Naive thymus-derived CD4-positive, alpha-beta T cell (primary cell): ENCODE measurements at regions of chr5 and their contacts with region 1.

Region 1: DNA sequence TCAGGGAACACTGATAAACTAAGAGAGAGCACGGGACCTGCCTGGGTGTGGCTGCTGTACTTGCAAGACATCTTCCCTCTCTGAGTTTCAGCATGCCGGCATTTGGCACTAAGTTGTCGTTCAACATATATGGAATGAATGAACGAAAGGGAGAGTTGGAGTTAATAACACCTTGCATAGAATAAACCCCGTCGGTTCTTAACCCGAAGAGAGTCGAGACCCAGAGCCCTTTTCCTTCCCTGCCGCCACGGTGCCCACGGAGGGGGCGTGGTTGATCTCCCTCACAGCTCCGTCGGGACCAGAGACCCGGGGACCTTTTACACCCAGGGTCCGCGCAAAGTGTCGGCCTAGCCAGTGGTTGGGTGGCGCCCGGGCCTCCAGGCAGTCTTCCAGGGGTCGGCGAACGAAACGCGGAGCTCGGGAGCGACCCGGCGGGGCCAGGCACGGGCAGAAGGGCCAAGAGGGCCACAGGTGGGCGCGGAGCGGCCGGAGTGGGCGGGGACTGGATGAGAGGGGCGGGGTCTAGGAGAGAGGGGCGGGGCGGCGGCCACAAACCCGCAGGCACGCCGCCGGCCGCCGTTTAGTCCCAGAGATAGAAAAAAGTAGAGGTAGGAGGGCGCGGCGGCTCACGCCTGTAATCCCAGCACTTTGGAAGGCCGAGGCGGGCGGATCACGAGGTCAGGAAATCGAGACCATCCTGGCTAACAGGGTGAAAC is 735 bp upstream of the RPL26L1 start:
- DNase-seq: peak in 7 of 9 donors; percentile 13 to 76 (median 57)
- ATAC-seq: peak; percentile 84
- H3K4me3 ChIP-seq: peak overlapping the region; percentile 90
- H3K4me3 Mint-ChIP-seq: peak overlapping the region; percentile 88 to 98 (median 97)
- H3K27ac ChIP-seq: peak overlapping the region; percentile 95
- H3K27ac Mint-ChIP-seq: peak overlapping the region; percentile 94 to 99 (median 98)
- H3K4me1 ChIP-seq: peaks cover 9 to 10% of the 10 kb centered on the region in 2 donors
- H3K4me1 Mint-ChIP-seq: peaks cover 18 to 45% (median 37%) of the 10 kb centered on the region in 7 donors
- H3K27me3 ChIP-seq: no peaks in the 10 kb centered on the region
- H3K27me3 Mint-ChIP-seq: peaks cover 0 to 4% (median 0%) of the 10 kb centered on the region in 5 donors

Region 2: DNA sequence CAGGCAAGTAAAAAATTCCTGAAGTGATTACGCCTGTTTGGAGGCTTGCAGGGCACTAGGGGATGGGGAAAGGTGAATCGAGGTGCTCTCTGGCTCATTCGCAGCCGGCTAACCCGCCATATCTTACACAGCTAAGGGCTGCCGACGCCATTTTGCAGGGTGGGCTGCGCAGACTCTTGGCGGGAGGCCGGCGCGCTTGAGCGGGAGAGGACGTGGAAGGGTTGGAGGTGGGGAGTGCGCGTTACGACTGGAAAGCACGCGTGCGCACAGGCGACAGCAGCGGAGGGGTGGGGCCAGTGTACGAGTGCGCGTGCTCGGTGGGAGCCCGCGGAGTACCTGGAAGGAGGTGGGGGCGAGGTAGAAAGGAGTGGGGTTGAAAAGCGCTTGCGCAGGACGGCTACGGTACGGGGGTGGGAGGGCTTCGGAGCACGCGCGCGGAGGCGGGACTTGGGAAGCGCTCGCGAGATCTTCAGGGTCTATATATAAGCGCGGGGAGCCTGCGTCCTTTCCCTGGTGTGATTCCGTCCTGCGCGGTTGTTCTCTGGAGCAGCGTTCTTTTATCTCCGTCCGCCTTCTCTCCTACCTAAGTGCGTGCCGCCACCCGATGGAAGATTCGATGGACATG is 1571.0 kb before region 1 on chr5 and contains the start of gene NPM1:
- CTCF ChIA-PET with region 1: no interaction called
- POLR2A ChIA-PET with region 1: no interaction called
- intact Hi-C with region 1: loop called (anchors 1 to 2 kb)
- DNase-seq: peak; percentile 90 to 99 (median 98)
- ATAC-seq: peak; percentile 93
- H3K4me3 ChIP-seq: peak within 1 kb of the TSS; percentile 91
- H3K4me3 Mint-ChIP-seq: peak within 1 kb of the TSS; percentile 92 to 99 (median 98)
- H3K27ac ChIP-seq: peak within 1 kb of the TSS; percentile 88
- H3K27ac Mint-ChIP-seq: peak within 1 kb of the TSS; percentile 96 to 100 (median 98)
- H3K4me1 ChIP-seq: peaks cover 31 to 40% of the 10 kb centered on the region in 2 donors
- H3K4me1 Mint-ChIP-seq: peaks cover 25 to 52% (median 49%) of the 10 kb centered on the region in 7 donors
- H3K27me3 ChIP-seq: no peaks in the 10 kb centered on the region
- H3K27me3 Mint-ChIP-seq: peaks cover 0 to 6% (median 0%) of the 10 kb centered on the region in 5 donors
- total RNA-seq, gene NPM1: 807 to 1,238 (median 1,192) TPM

Region 3: GRCh38 chr5:172454358-172455086 is 504.0 kb before region 1 on chr5 and contains the start of gene SH3PXD2B:
- CTCF ChIA-PET with region 1: no interaction called
- POLR2A ChIA-PET with region 1: no interaction called
- intact Hi-C with region 1: loop called (anchors 10 kb)
- DNase-seq: peak in 7 of 9 donors; percentile 11 to 52 (median 47)
- ATAC-seq: peak; percentile 73
- H3K4me3 ChIP-seq: peak within 1 kb of the TSS; percentile 36
- H3K4me3 Mint-ChIP-seq: peak within 1 kb of the TSS; percentile 82 to 93 (median 86)
- H3K27ac ChIP-seq: no peak within 1 kb of the TSS
- H3K27ac Mint-ChIP-seq: peak within 1 kb of the TSS in 7 of 9 donors; percentile 39 to 66 (median 52)
- H3K4me1 ChIP-seq: no peaks in the 10 kb centered on the region
- H3K4me1 Mint-ChIP-seq: peaks cover 8 to 17% (median 13%) of the 10 kb centered on the region in 7 donors
- H3K27me3 ChIP-seq: peaks cover 0 to 4% of the 10 kb centered on the region in 2 donors
- H3K27me3 Mint-ChIP-seq: peaks cover 12 to 59% (median 39%) of the 10 kb centered on the region in 5 donors
- total RNA-seq, gene SH3PXD2B: 0.15 to 1.1 (median 0.34) TPM

Region 4: DNA sequence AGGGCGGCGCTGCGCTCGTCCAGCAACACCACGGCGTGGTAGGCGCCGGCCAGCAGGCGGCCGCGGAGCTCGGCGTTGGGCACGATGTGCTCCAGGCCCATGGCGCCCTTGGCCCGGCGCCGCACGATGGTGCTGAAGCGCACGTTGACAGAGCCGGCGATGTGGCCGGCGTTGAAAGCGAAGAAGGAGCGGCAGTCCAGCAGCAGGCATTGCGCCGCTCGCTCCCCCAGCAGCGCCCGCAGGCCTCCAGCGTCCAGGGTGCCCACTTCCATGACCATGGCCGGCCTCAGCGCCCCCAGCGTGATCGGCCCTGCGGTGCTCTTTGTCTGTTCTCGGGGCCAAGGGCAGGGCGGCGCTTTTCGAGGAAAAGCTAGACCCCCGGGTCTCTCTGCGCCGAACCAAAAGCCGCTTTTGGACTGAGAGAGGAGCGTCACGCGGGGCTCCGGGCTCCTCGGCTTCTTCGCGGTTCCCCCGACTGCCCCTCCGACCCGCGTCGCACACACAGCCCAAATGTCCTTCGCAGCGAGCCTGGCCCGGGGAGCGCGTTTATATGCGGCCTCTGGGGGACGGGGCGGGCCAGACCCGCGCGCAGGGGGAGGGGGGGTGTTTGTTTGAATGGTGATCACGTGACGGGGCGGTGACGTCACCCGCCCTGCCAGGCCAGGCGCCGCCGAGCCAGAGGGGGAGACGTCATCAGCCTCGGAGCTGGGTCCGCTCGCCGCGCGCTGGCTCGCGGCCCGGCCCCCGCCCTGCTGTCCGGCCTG is 187.6 kb before region 1 on chr5 and contains the start of gene DUSP1:
- CTCF ChIA-PET with region 1: interaction called, 3 read pairs
- POLR2A ChIA-PET with region 1: interaction called, 4 read pairs
- intact Hi-C with region 1: loop called in 1 of 2 experiments (anchors 1 kb)
- DNase-seq: peak; percentile 94 to 99 (median 96)
- ATAC-seq: peak; percentile 64
- H3K4me3 ChIP-seq: peak within 1 kb of the TSS; percentile 81
- H3K4me3 Mint-ChIP-seq: peak within 1 kb of the TSS; percentile 89 to 97 (median 94)
- H3K27ac ChIP-seq: peak within 1 kb of the TSS; percentile 97
- H3K27ac Mint-ChIP-seq: peak within 1 kb of the TSS; percentile 97 to 100 (median 100)
- H3K4me1 ChIP-seq: peaks cover 26 to 39% of the 10 kb centered on the region in 2 donors
- H3K4me1 Mint-ChIP-seq: peaks cover 21 to 73% (median 63%) of the 10 kb centered on the region in 7 donors
- H3K27me3 ChIP-seq: no peaks in the 10 kb centered on the region
- H3K27me3 Mint-ChIP-seq: no peaks in the 10 kb centered on the region
- total RNA-seq, gene DUSP1: 5.4 to 2,522 (median 40.7) TPM

Region 5: GRCh38 chr5:172932313-172933017 is 26.0 kb before region 1 on chr5:
- CTCF ChIA-PET with region 1: interaction called, 10 read pairs
- POLR2A ChIA-PET with region 1: interaction called, 3 read pairs
- intact Hi-C with region 1: no loop called
- DNase-seq: peak; percentile 53 to 79 (median 68)
- ATAC-seq: peak; percentile 98
- H3K4me3 ChIP-seq: no peak overlapping the region
- H3K4me3 Mint-ChIP-seq: no peak overlapping the region
- H3K27ac ChIP-seq: no peak overlapping the region
- H3K27ac Mint-ChIP-seq: peak overlapping the region in 8 of 9 donors; percentile 25 to 82 (median 52)
- H3K4me1 ChIP-seq: no peaks in the 10 kb centered on the region
- H3K4me1 Mint-ChIP-seq: peaks cover 0 to 13% (median 6%) of the 10 kb centered on the region in 7 donors
- H3K27me3 ChIP-seq: no peaks in the 10 kb centered on the region
- H3K27me3 Mint-ChIP-seq: no peaks in the 10 kb centered on the region

Region 6: DNA sequence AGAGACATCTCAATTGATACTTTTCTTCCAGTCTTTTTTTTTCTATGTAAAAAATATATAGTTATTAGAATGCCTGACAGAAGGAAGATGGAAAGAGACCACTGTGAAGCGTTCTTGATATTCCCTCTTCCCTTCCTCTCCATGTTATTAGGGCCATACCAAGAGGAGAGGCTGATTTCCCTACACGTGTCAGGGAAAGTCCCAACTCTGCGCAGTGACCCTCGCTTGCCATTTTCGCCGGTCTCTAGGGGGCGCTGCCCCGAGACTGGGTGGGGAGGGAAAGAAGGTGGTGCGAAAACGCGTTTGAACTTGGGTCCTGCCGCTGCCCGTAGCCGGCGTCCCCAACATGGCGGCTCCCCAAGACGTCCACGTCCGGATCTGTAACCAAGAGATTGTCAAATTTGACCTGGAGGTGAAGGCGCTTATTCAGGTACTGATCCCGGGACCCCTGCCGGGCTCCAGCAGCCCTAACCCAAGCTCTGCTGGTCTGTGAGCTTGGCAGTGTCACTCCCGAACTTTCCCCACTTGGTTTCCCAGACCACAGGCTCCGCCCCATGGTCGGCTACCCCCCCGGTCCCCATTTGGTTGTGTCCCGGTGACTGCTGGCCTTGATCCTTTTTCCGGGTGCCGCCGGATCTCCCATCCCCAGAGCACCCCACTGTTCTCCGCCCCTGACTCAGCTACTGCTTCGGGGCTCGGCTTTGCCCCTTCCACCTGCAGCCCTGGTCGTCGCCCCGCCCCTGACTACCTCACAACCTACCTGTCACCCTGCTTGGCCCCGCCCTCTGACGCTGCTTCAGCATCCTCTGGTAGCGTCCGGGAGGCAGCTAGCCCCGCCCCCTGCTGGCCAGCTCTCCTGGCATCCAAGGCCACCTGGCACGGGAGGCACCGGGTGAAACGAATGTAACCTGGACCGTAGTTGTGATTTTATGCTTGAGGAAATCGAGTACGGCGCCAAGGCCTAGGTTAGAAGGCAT is 186.0 kb after region 1 on chr5 and contains the start of gene BNIP1:
- CTCF ChIA-PET with region 1: no interaction called
- POLR2A ChIA-PET with region 1: interaction called, 5 read pairs
- intact Hi-C with region 1: loop called (anchors 1 kb)
- DNase-seq: peak; percentile 92 to 99 (median 96)
- ATAC-seq: peak; percentile 94
- H3K4me3 ChIP-seq: peak within 1 kb of the TSS; percentile 100
- H3K4me3 Mint-ChIP-seq: peak within 1 kb of the TSS; percentile 93 to 99 (median 97)
- H3K27ac ChIP-seq: peak within 1 kb of the TSS; percentile 98
- H3K27ac Mint-ChIP-seq: peak within 1 kb of the TSS; percentile 96 to 99 (median 98)
- H3K4me1 ChIP-seq: no peaks in the 10 kb centered on the region
- H3K4me1 Mint-ChIP-seq: peaks cover 5 to 21% (median 16%) of the 10 kb centered on the region in 7 donors
- H3K27me3 ChIP-seq: no peaks in the 10 kb centered on the region
- H3K27me3 Mint-ChIP-seq: no peaks in the 10 kb centered on the region
- total RNA-seq, gene BNIP1: 5.5 to 23.2 (median 15.3) TPM

Region 7: GRCh38 chr5:173887610-173888472 is 929.4 kb after region 1 on chr5 and contains the start of gene CPEB4:
- CTCF ChIA-PET with region 1: no interaction called
- POLR2A ChIA-PET with region 1: no interaction called
- intact Hi-C with region 1: loop called in 1 of 2 experiments (anchors 1 kb)
- DNase-seq: peak; percentile 89 to 98 (median 97)
- ATAC-seq: peak; percentile 97
- H3K4me3 ChIP-seq: peak within 1 kb of the TSS; percentile 70
- H3K4me3 Mint-ChIP-seq: peak within 1 kb of the TSS; percentile 91 to 99 (median 96)
- H3K27ac ChIP-seq: peak within 1 kb of the TSS; percentile 82
- H3K27ac Mint-ChIP-seq: peak within 1 kb of the TSS; percentile 94 to 100 (median 98)
- H3K4me1 ChIP-seq: peaks cover 49 to 60% of the 10 kb centered on the region in 2 donors
- H3K4me1 Mint-ChIP-seq: peaks cover 61 to 88% (median 78%) of the 10 kb centered on the region in 7 donors
- H3K27me3 ChIP-seq: no peaks in the 10 kb centered on the region
- H3K27me3 Mint-ChIP-seq: no peaks in the 10 kb centered on the region
- total RNA-seq, gene CPEB4: 12.6 to 40.4 (median 17.5) TPM